Heart left ventricle (tissue), 16 donors: ENCODE measurements at regions of chr7 and their contacts with region 1.

Region 1: GRCh38 chr7:10225275-10225674 is 748.4 kb upstream of the PHF14 start:
- DNase-seq: no peak
- ATAC-seq: peak in 2 of 4 donors; percentile 51 to 63
- H3K4me3 ChIP-seq: peak overlapping the region in 1 of 12 donors; percentile 0
- H3K27ac ChIP-seq: peak overlapping the region in 5 of 12 donors; percentile 11 to 48 (median 28)
- H3K4me1 ChIP-seq: peaks cover 0 to 29% (median 10%) of the 10 kb centered on the region in 12 donors
- H3K27me3 ChIP-seq: no peaks in the 10 kb centered on the region
- CTCF ChIP-seq: no peak
- POLR2A ChIP-seq: no peak

Region 2: DNA sequence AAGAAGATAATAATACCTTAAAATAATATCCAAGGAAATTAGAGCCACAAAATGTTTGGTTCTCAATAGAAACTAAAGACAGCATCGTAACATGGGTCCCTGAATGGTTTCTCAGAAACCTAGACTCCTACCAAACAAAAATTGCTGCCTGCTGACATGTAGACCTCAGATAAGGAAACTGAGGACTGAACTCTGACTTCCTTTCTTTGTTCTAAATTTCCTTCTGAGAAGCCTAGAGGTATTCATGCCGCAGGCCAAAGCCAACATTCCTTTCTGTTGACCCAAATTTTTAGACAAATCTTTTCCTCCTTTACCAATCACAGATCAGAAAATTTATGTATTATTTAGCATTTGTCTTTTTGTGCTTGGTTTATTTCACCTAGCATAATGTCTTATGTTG is 68.3 kb before region 1 on chr7:
- intact Hi-C with region 1: loop called in 2 of 10 experiments (anchors 5 to 10 kb)
- DNase-seq: peak in 2 of 5 donors; percentile 10 to 15
- ATAC-seq: peak; percentile 51 to 91 (median 66)
- H3K4me3 ChIP-seq: peak overlapping the region in 9 of 12 donors; percentile 10 to 50 (median 39)
- H3K27ac ChIP-seq: peak overlapping the region in 9 of 12 donors; percentile 39 to 70 (median 53)
- H3K4me1 ChIP-seq: no peaks in the 10 kb centered on the region
- H3K27me3 ChIP-seq: no peaks in the 10 kb centered on the region
- CTCF ChIP-seq: no peak
- POLR2A ChIP-seq: no peak

Region 3: GRCh38 chr7:10412422-10413019 is 187.2 kb after region 1 on chr7:
- intact Hi-C with region 1: no loop called
- DNase-seq: peak in 1 of 5 donors; percentile 16
- ATAC-seq: no peak
- H3K4me3 ChIP-seq: no peak overlapping the region
- H3K27ac ChIP-seq: no peak overlapping the region
- H3K4me1 ChIP-seq: no peaks in the 10 kb centered on the region
- H3K27me3 ChIP-seq: no peaks in the 10 kb centered on the region
- CTCF ChIP-seq: peak; percentile 61 to 86 (median 72)
- POLR2A ChIP-seq: no peak